Natural killer cell (primary cell): ENCODE measurements at regions of chr15 and their contacts with region 1.

Region 1: DNA sequence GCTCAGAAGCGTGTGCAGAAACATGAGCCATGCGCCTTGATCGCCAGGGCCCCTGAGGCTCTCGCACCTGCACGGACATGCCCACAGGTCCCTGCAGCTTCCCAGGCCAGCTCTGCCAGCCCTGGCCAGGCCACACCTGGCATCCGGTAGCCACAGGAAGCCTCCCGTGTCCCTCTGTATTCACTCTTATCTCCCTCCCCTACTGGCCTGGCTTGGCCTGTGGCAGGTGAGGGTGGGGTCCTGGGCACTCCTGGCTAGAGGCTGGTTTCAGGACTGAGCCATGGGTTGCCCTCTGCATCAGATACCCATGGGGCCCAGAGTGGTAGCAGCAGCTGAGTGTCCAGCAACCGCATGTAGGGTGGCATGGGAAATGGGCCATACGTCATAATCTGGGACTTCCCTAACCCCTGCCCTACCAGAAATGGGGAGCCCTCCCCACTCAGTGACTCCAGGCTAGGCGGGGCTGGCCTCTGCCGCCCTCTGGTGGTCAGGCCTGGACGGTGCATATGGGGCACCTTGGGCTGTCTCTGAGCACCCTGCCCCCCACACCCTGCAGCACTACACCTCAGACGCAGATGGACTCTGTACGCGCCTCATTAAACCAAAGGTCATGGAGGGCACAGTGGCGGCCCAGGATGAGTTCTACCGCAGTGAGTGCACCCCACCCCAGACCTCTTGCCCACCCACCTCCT is 12.6 kb upstream of the LMAN1L start:
- DNase-seq: peak; percentile 90 to 94
- ATAC-seq: peak; percentile 89 to 98 (median 93)
- H3K4me3 ChIP-seq: no peak overlapping the region
- H3K4me3 Mint-ChIP-seq: peak overlapping the region; percentile 75
- H3K27ac ChIP-seq: peak overlapping the region; percentile 97
- H3K27ac Mint-ChIP-seq: peak overlapping the region; percentile 92 to 93
- H3K4me1 ChIP-seq: peaks cover 63% of the 10 kb centered on the region
- H3K4me1 Mint-ChIP-seq: peaks cover 31 to 57% of the 10 kb centered on the region in 2 donors
- H3K27me3 ChIP-seq: no peaks in the 10 kb centered on the region
- H3K27me3 Mint-ChIP-seq: no peaks in the 10 kb centered on the region
- CTCF ChIP-seq: peak; percentile 94

Region 2: DNA sequence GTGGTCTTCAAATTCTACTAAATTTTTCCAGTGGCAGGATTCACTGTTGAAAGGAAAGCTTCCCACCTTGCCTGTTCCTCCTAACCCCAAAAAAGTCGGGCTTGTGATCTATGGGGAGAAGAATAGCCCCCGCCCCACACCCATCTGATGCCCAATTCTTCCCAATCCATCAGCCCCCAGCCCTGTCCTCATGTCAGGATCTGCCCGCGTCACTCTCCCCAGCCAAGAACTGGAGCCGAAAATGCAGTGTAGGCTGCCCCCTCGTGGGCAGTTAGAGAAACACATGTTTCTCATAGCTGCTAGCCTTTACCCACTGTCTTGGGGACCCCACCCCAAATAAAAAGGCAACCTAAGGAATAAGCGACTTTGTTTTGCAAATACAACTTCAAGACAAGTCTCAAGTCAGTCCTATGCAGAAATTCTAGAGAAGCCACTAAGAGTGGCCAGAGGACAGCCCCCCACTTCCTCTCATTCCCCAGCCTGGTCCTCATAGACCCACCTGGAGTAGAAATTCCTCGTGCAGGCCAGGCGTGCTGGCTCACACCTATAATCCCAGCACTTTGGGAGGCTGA is 31.1 kb before region 1 on chr15:
- intact Hi-C with region 1: loop called (anchors 1 kb)
- DNase-seq: peak; percentile 53 to 80
- ATAC-seq: peak; percentile 60 to 68 (median 65)
- H3K4me3 ChIP-seq: no peak overlapping the region
- H3K4me3 Mint-ChIP-seq: no peak overlapping the region
- H3K27ac ChIP-seq: no peak overlapping the region
- H3K27ac Mint-ChIP-seq: peak overlapping the region in 1 of 2 donors; percentile 35
- H3K4me1 ChIP-seq: peaks cover 26% of the 10 kb centered on the region
- H3K4me1 Mint-ChIP-seq: peaks cover 6 to 11% of the 10 kb centered on the region in 2 donors
- H3K27me3 ChIP-seq: no peaks in the 10 kb centered on the region
- H3K27me3 Mint-ChIP-seq: peaks cover 7 to 11% of the 10 kb centered on the region in 2 donors
- CTCF ChIP-seq: peak; percentile 82

Region 3: DNA sequence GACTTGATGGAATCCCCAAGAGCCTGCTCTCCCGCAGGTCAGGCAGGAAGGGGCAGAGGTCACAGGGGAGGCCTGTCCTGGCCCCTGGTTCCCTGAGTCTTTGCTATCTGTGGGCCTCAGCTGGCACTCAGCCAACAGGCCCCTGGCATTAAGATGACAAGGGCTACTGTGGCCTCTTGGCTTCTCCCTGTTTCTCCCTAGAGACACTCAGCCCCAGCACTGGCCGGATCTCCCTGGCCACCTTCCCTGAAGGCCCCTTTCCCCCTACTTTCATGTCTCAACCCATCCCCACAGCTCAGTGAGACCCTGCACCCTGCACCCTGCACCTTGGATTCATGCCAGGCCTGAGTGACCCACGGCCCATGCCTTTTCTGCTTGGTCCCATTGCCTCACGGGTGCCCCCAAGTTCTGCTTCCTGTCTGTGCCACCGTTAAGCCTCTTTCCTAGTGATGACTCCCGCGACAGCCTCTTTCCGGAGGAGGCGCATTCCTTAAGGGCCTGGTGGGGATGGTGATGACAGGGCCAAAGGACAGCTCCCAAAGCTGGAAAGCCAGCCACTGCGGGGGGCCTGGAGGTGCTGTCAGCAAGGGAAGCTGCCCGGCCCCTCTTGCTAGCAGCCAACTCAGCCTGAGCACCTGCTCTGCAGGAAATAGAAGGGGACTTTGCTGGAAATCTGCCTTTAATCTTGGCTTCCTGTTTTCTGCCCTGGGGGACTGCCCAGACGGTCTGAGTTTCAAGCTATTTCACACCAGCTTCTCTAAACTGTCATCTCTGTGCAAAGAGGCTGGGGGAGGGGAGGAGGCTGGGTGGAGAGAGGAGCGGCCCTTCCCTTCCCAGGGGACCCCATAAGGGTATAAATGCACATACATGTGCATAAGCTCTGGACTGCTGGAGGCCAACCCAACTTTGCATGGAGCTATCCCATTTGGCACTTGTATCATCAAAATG is 22.9 kb before region 1 on chr15:
- intact Hi-C with region 1: loop called (anchors 1 kb)
- DNase-seq: peak; percentile 56 to 90
- ATAC-seq: peak; percentile 58 to 68 (median 61)
- H3K4me3 ChIP-seq: no peak overlapping the region
- H3K4me3 Mint-ChIP-seq: peak overlapping the region; percentile 47
- H3K27ac ChIP-seq: peak overlapping the region; percentile 90
- H3K27ac Mint-ChIP-seq: peak overlapping the region; percentile 97 to 98
- H3K4me1 ChIP-seq: peaks cover 76% of the 10 kb centered on the region
- H3K4me1 Mint-ChIP-seq: peaks cover 51 to 59% of the 10 kb centered on the region in 2 donors
- H3K27me3 ChIP-seq: no peaks in the 10 kb centered on the region
- H3K27me3 Mint-ChIP-seq: no peaks in the 10 kb centered on the region
- CTCF ChIP-seq: no peak

Region 4: DNA sequence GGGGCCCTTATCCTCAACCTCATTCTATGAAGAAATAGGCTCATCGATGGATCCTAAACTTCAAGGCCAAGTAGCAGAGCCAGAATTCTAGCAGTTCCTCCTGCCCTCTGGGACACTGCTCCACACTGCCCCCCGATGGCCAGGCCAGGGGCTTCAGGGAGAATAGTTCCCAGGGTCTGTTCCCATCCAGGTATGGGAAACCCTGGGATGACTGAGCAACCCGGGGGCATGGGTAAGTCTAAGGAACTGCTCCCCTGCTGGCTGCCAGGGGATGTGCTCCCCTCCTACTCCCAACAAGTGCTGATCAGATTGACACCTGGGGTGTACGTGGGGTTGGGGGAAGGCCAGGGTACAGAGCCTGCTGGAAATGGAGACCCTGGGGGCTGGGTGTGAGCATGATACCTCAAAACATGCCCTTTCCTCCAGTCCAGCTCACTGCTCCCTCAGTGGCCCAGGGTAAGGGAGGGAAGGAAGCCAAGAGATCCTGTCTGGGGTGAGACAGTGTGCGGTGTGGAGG is 35.4 kb after region 1 on chr15:
- intact Hi-C with region 1: no loop called
- DNase-seq: peak in 1 of 2 donors; percentile 61
- ATAC-seq: peak in 2 of 3 donors; percentile 65 to 72
- H3K4me3 ChIP-seq: no peak overlapping the region
- H3K4me3 Mint-ChIP-seq: no peak overlapping the region
- H3K27ac ChIP-seq: no peak overlapping the region
- H3K27ac Mint-ChIP-seq: peak overlapping the region in 1 of 2 donors; percentile 63
- H3K4me1 ChIP-seq: no peaks in the 10 kb centered on the region
- H3K4me1 Mint-ChIP-seq: peaks cover 4 to 10% of the 10 kb centered on the region in 2 donors
- H3K27me3 ChIP-seq: no peaks in the 10 kb centered on the region
- H3K27me3 Mint-ChIP-seq: no peaks in the 10 kb centered on the region
- CTCF ChIP-seq: peak; percentile 59

Region 5: DNA sequence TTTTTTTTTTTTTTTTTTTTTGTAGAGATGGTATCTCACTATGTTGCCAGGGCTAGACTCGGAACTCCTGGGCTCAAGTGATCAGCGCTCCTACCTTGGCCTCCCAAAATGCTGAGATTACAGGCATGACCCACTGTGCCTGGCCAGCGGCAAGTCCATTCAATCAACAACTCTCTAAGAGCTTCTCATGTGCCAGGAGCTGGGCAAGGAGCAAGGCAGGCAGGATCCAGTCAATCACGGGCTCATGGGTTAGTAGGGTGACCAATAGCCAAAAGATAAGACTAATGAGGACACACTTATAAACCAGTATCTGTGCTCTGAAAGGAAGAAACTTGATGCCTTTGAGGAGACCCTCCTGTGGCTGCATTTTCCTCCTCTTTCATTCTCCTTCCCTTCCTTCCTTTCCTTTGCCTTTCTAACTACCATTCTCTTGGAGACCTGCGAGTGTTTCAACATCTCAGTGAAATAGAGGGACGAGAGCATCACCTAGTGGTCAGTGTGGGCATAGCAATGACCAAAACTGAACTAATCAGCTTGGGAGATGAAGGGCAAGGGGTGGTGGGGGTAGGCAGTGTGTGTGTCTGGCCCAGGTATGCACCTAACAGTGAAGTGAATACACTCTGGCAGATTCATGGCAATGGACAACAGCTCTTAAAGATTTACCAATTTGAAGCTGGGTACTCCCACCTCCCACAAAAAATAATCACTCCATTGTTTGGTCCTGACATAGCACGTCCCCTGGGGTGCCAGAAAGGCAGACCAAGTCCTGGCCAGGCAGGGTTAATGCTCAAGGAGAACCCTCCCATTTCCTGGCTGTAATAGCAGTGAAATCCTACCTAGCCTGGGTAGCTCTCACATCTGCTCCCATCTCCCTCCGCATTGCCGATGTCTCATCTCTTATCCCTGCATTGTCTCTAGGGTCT is 150.3 kb after region 1 on chr15:
- intact Hi-C with region 1: loop called (anchors 1 kb)
- DNase-seq: peak; percentile 69 to 90
- ATAC-seq: peak; percentile 88 to 99 (median 97)
- H3K4me3 ChIP-seq: no peak overlapping the region
- H3K4me3 Mint-ChIP-seq: no peak overlapping the region
- H3K27ac ChIP-seq: no peak overlapping the region
- H3K27ac Mint-ChIP-seq: no peak overlapping the region
- H3K4me1 ChIP-seq: no peaks in the 10 kb centered on the region
- H3K4me1 Mint-ChIP-seq: peaks cover 0 to 4% of the 10 kb centered on the region in 2 donors
- H3K27me3 ChIP-seq: no peaks in the 10 kb centered on the region
- H3K27me3 Mint-ChIP-seq: peaks cover 0 to 4% of the 10 kb centered on the region in 2 donors
- CTCF ChIP-seq: peak; percentile 91